ENCODE measurements at regions of chr9 and their contacts with region 1.

Region 1: DNA sequence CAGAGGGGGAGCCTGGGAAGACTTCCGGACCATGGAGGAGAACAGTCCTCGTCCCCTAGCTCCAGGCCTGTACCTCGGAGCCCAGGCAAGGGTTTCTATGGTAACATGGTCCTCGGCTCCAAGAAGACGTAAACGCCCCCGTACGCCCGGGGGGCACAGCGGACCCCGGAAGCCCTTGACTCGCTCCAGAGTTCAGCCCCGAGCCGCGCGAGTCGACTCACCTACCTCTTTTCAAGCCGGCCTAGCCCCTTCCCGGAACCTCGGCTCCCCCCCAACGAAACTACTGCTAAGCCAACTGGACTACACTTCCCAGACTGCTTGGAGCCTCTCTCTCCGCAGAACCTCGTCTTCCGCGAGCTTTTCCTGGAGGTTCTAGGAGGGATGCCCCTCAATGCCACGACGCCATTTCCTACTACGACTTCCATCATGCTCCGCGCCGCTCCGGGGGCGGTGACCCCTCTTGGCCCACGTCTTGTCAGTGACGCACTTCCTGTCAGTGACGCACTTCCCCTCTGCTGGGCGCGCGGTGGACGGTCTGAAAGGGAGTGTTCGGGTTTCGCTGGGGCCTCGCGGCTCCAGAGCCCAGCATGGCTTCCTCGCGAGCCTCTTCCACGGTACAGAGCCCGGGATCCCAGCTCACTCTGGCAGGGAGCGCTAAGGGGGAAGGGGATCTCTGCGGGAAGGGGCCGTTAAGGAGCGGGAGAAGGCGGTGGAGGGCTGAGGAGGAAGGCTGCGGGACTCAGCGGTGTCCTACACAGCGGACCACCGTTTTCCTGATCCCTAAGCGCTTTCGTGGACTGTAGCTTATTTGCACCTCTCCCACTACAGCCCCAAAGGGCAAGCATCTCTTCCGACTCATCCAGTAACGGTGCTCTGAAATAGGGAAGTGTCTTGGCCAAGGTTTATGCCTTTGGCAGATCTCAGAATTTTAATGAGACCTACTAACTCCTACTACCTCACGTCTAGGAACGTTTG is at the starts of genes CDC26 and PRPF4:
- DNase-seq: peak; percentile 99
- H3K4me3 ChIP-seq: peak within 1 kb of the TSS; percentile 55 to 81 (median 74)
- H3K27ac ChIP-seq: peak within 1 kb of the TSS; percentile 94
- H3K4me1 ChIP-seq: peaks cover 13% of the 10 kb centered on the region
- H3K27me3 ChIP-seq: no peaks in the 10 kb centered on the region
- CTCF ChIP-seq: no peak
- POLR2A ChIP-seq: peak; percentile 94
- total RNA-seq, gene CDC26: 36.9 and 37.5 TPM in 2 replicates
- total RNA-seq, gene PRPF4: 24.2 and 25.8 TPM in 2 replicates

Region 2: DNA sequence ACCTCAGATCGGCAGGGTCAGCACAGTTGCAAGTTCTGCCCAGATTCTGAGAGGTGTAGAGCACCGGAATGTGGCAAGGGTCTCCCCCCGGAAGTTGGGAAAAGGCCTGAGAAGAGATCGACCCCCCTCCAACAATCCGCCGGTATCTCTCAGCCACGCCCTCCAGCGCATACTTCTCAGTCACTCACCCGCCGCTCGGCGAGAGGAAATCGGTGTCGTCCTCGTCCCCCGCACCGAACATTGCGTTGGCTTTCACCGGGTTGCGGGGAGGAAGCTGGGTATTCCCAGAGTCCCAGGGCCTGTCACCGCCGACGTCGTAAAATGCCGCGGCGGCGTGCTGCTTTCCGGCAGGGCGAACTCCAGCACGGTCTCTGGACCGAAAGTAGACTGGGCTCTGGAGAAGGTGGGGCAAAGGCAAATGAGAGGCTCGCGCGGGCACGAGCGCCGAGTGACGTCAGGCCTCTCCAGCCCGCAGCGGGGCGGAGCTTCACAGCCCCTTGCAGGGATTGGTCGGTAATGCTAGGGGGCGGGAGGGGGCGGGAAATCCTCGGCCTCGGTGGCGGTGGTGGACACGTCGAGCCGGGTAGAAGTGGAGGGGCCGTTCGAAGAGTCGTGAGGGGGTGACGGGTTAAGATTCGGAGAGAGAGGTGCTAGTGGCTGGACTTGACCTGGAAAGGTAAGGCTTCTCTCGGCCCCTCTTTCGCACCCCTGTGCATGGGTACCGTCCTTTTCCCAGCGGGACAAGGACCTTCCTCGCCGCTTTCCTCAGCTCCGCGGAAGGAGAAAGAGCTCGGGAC is 54.2 kb before region 1 on chr9 and contains the starts of genes FKBP15 and SLC31A1:
- CTCF ChIA-PET with region 1: interaction called, 16 read pairs
- POLR2A ChIA-PET with region 1: interaction called, 5 read pairs
- dilution Hi-C with region 1: no loop called
- intact Hi-C with region 1: loop called (anchors 1 kb)
- DNase-seq: peak; percentile 99
- H3K4me3 ChIP-seq: peak within 1 kb of the TSS; percentile 71 to 94 (median 90)
- H3K27ac ChIP-seq: peak within 1 kb of the TSS; percentile 65
- H3K4me1 ChIP-seq: peaks cover 21% of the 10 kb centered on the region
- H3K27me3 ChIP-seq: no peaks in the 10 kb centered on the region
- CTCF ChIP-seq: no peak
- POLR2A ChIP-seq: peak; percentile 75
- total RNA-seq, gene FKBP15: 24.6 and 26.8 TPM in 2 replicates
- total RNA-seq, gene SLC31A1: 20.8 and 22.7 TPM in 2 replicates

Region 3: GRCh38 chr9:113340017-113340699 is 64.7 kb after region 1 on chr9 and contains the start of gene WDR31:
- CTCF ChIA-PET with region 1: interaction called, 6 read pairs
- POLR2A ChIA-PET with region 1: interaction called, 9 read pairs
- dilution Hi-C with region 1: no loop called
- intact Hi-C with region 1: loop called (anchors 1 kb)
- DNase-seq: peak; percentile 93
- H3K4me3 ChIP-seq: peak within 1 kb of the TSS; percentile 86 to 90 (median 86)
- H3K27ac ChIP-seq: peak within 1 kb of the TSS; percentile 20
- H3K4me1 ChIP-seq: peaks cover 8% of the 10 kb centered on the region
- H3K27me3 ChIP-seq: peaks cover 0 to 5% of the 10 kb centered on the region in 2 experiments
- CTCF ChIP-seq: no peak
- POLR2A ChIP-seq: peak; percentile 58
- total RNA-seq, gene WDR31: 0.62 and 1.00 TPM in 2 replicates

Region 4: GRCh38 chr9:113401027-113401792 is 125.8 kb after region 1 on chr9 and contains the start of gene ALAD:
- CTCF ChIA-PET with region 1: interaction called, 24 read pairs
- POLR2A ChIA-PET with region 1: interaction called, 4 read pairs
- dilution Hi-C with region 1: no loop called
- intact Hi-C with region 1: loop called (anchors 1 kb)
- DNase-seq: peak; percentile 99
- H3K4me3 ChIP-seq: peak within 1 kb of the TSS; percentile 48 to 84 (median 51)
- H3K27ac ChIP-seq: no peak within 1 kb of the TSS
- H3K4me1 ChIP-seq: peaks cover 24% of the 10 kb centered on the region
- H3K27me3 ChIP-seq: no peaks in the 10 kb centered on the region
- CTCF ChIP-seq: peak; percentile 99
- POLR2A ChIP-seq: peak; percentile 68
- total RNA-seq, gene ALAD: 29.5 TPM in 2 replicates

Region 5: DNA sequence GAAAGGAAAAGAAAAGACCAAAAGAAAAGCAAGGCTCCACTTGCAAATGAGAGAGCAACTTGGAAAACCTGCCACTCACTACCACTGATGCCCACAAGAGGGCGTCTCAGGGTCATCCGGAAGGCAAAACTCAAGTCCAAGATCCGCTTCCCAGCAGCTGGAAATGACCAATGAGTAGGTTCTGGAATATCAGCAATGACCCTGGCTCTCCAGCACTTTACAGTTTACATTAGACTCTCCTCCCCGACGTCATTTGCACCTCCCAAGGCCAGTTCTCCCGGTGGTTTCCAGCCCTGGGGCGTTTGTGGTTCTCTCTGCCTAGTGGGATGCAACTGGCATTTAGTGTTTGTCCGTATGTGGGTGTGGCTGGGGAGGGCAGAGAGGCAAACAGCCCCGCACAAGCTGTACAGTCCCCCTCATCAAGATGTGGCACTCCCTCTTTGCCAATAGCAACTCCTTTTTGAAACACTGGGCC is 406.9 kb after region 1 on chr9:
- CTCF ChIA-PET with region 1: no interaction called
- POLR2A ChIA-PET with region 1: no interaction called
- dilution Hi-C with region 1: no loop called
- intact Hi-C with region 1: loop called (anchors 2 kb)
- DNase-seq: peak; percentile 85
- H3K4me3 ChIP-seq: no peak overlapping the region
- H3K27ac ChIP-seq: no peak overlapping the region
- H3K4me1 ChIP-seq: no peaks in the 10 kb centered on the region
- H3K27me3 ChIP-seq: peaks cover 9 to 11% of the 10 kb centered on the region in 2 experiments
- CTCF ChIP-seq: peak; percentile 92 to 95
- POLR2A ChIP-seq: no peak